Activated CD4-positive, alpha-beta memory T cell treated with anti-CD3 and anti-CD28 coated beads, Interleukin-2, amount 10 ng/mL, durations not matched to agents 7 days and 5 days (primary cell): ENCODE measurements at regions of chr1 and their contacts with region 1.

Region 1: DNA sequence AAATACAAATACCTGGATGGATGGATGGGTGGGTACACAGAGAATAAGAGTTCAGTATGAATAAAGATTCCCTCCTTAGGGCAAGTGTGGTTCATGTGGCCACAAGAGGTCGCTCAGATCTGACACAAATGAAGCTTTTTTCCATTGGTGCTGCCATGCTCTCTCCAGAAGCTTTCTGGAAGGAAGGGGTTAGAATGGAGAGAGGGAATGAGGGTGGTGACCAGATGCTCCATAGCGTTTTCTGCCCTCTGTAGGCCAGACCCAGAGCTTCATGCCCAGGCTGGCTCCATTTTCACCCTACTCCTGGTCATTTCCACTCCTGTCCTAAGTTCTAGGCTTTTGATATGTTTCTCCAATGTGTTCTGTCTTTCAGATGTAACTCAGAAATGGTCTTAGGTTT is 3.3 kb upstream of the FCRL6 start:
- DNase-seq: peak; percentile 52
- H3K4me3 Mint-ChIP-seq: no peak overlapping the region
- H3K27ac Mint-ChIP-seq: no peak overlapping the region
- H3K4me1 Mint-ChIP-seq: peaks cover 16% of the 10 kb centered on the region
- H3K27me3 Mint-ChIP-seq: peaks cover 41% of the 10 kb centered on the region

Region 2: DNA sequence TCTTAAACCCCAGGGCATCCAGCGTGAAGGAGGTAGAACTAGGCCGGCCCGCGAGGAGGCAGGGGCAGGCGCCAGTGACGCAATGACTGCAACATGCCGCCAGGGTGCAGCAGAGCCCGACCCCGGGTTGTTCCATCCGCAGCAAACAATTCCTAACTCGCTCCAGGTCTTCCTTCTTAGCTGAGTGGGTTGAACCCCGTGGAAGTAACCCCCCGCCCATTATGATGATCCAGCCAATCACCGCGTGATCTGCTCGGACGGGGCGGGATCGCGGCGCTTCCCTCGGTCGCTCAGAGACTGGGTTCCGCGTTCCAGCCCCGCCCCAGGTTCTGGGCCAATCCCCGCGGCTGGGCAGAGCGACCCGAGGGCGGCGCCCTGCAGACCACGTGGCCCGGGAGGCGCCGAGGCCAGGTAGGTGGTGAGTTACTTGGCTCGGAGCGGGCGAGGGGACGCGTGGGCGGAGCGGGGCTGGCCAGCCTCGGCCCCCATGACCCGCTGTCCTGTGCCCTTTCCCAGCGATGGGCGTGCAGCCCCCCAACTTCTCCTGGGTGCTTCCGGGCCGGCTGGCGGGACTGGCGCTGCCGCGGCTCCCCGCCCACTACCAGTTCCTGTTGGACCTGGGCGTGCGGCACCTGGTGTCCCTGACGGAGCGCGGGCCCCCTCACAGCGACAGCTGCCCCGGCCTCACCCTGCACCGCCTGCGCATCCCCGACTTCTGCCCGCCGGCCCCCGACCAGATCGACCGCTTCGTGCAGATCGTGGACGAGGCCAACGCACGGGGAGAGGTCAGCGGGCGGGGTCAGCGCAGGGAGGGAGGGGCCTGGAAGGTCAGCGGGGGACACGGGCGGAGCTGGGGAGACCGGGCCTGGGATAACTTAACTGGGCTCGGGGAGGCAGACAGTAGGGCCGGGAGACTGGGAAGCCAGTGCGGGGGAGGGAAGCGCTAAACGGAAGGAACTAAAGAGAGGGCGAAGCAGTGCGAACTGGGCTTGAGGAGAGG is 18.0 kb before region 1 on chr1 and contains the start of gene DUSP23:
- CTCF ChIA-PET with region 1: interaction called, 14 read pairs
- POLR2A ChIA-PET with region 1: no interaction called
- DNase-seq: peak; percentile 97
- H3K4me3 Mint-ChIP-seq: peak within 1 kb of the TSS; percentile 79
- H3K27ac Mint-ChIP-seq: peak within 1 kb of the TSS; percentile 44
- H3K4me1 Mint-ChIP-seq: peaks cover 34% of the 10 kb centered on the region
- H3K27me3 Mint-ChIP-seq: no peaks in the 10 kb centered on the region
- total RNA-seq, gene DUSP23: 22.7 to 24.6 TPM

Region 3: GRCh38 chr1:159817276-159818041 is 18.6 kb after region 1 on chr1:
- CTCF ChIA-PET with region 1: interaction called, 16 read pairs
- POLR2A ChIA-PET with region 1: no interaction called
- DNase-seq: no peak
- H3K4me3 Mint-ChIP-seq: no peak overlapping the region
- H3K27ac Mint-ChIP-seq: no peak overlapping the region
- H3K4me1 Mint-ChIP-seq: no peaks in the 10 kb centered on the region
- H3K27me3 Mint-ChIP-seq: peaks cover 20% of the 10 kb centered on the region

Region 4: GRCh38 chr1:159826441-159827101 is 27.7 kb after region 1 on chr1 and contains the start of gene SLAMF8:
- CTCF ChIA-PET with region 1: interaction called, 10 read pairs
- POLR2A ChIA-PET with region 1: interaction called, 11 read pairs
- DNase-seq: peak; percentile 83
- H3K4me3 Mint-ChIP-seq: no peak within 1 kb of the TSS
- H3K27ac Mint-ChIP-seq: peak within 1 kb of the TSS; percentile 59
- H3K4me1 Mint-ChIP-seq: peaks cover 43% of the 10 kb centered on the region
- H3K27me3 Mint-ChIP-seq: peaks cover 38% of the 10 kb centered on the region
- total RNA-seq, gene SLAMF8: 0.10 to 0.15 TPM